ENCODE measurements at regions of chr1 and their contacts with region 1.

Region 1: GRCh38 chr1:78004719-78005447 is at the start of gene DNAJB4:
- DNase-seq: peak; percentile 97
- H3K4me3 Mint-ChIP-seq: peak within 1 kb of the TSS; percentile 88
- H3K27ac Mint-ChIP-seq: peak within 1 kb of the TSS; percentile 97
- H3K4me1 Mint-ChIP-seq: peaks cover 19% of the 10 kb centered on the region
- H3K27me3 Mint-ChIP-seq: no peaks in the 10 kb centered on the region
- CTCF ChIP-seq: no peak
- total RNA-seq, gene DNAJB4: 28.5 and 33.5 TPM in 2 replicates

Region 2: DNA sequence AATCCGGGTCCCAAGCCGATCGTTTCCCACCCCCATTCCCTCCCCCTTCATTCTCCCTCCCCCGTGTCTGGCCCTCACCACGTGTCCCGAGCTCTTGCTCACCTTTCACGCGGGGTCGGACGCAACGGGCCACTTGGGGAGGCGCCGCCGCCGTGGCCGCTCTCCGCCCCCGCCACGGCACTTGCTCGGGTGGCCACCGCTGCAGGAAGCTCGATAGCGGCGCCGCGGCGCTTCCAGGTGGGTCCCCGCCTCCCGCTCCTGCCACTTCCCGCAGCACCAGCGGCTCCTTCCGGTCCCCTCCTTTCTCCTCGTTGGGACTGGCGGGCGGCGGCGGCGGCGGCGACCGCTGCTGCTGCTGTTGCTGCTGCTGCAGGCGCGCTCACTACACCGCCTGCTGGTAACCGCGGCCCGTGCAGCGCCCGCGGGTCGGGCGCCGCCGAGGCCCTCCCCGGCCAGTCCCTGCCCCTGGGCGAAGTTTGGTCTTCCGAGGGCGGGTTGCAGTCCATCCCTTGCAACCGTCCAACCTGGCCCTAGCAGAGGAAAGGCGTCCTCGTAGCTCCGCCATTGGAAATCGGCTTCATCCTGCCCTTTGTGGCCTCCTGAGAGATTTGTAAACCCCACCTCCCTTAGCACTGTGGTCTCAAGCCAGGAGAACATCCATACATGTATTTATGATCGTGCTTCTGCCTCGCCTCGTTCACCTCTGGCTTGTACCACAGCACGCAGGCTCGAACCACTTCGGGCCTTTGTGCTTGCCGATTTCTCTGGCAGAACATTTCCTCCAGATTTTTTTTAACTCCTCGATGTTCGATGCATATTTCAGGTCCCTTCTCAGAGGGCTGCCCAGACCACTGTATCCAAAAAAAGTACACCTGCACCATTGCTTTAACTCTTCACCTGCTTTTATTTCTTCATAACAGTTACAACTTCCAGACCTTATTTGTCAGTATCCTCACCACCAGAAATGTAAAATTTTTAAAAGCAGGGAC is 321.4 kb before region 1 on chr1:
- CTCF ChIA-PET with region 1: no interaction called
- POLR2A ChIA-PET with region 1: interaction called, 14 read pairs
- intact Hi-C with region 1: no loop called
- DNase-seq: peak; percentile 89
- H3K4me3 Mint-ChIP-seq: peak overlapping the region; percentile 89
- H3K27ac Mint-ChIP-seq: peak overlapping the region; percentile 99
- H3K4me1 Mint-ChIP-seq: peaks cover 28% of the 10 kb centered on the region
- H3K27me3 Mint-ChIP-seq: no peaks in the 10 kb centered on the region
- CTCF ChIP-seq: peak; percentile 94

Region 3: DNA sequence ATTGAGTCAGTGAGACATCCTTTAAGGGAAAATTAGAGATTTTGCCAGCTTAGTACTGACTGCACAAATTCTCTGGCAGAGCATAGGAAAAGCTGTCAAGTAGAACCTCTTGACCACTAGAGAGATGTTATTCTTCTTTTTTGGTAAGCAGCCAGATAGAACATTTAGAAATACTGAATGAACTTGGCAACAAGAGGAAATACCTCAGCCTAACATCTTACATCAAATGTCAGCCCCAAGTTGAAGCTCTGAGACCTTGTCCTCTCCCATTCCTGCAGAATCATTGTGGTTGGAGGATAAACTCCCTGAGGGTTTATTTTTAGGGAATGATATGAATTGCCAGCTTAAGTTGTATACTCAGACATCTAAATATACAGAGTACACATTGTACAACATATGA is 172.0 kb before region 1 on chr1:
- CTCF ChIA-PET with region 1: no interaction called
- POLR2A ChIA-PET with region 1: interaction called, 10 read pairs
- intact Hi-C with region 1: no loop called
- DNase-seq: peak; percentile 92
- H3K4me3 Mint-ChIP-seq: peak overlapping the region; percentile 6
- H3K27ac Mint-ChIP-seq: peak overlapping the region; percentile 96
- H3K4me1 Mint-ChIP-seq: peaks cover 46% of the 10 kb centered on the region
- H3K27me3 Mint-ChIP-seq: no peaks in the 10 kb centered on the region
- CTCF ChIP-seq: no peak

Region 4: GRCh38 chr1:77994117-77994705 is 10.7 kb before region 1 on chr1:
- CTCF ChIA-PET with region 1: interaction called, 6 read pairs
- POLR2A ChIA-PET with region 1: interaction called, 21 read pairs
- intact Hi-C with region 1: no loop called
- DNase-seq: no peak
- H3K4me3 Mint-ChIP-seq: no peak overlapping the region
- H3K27ac Mint-ChIP-seq: no peak overlapping the region
- H3K4me1 Mint-ChIP-seq: peaks cover 18% of the 10 kb centered on the region
- H3K27me3 Mint-ChIP-seq: no peaks in the 10 kb centered on the region
- CTCF ChIP-seq: no peak

Region 5: DNA sequence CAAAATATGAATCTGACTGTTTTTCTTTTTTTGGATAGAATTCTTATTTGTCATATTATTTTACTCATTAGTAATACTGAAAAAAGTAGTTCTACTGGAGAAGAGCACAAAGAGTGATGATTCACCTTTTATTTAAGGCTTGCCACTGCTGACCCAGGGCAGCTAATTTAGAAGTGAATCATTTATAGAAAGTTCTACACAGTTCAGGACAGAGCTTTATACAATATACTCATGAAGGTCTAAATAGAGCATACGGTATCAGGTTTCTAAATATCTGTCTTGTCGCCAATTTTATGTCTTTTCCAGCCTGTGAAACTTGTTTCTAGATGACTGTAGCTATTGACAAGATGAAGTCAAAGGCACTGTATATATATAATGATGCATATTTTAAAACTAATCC is 65.9 kb after region 1 on chr1:
- CTCF ChIA-PET with region 1: interaction called, 4 read pairs
- POLR2A ChIA-PET with region 1: interaction called, 10 read pairs
- intact Hi-C with region 1: no loop called
- DNase-seq: peak; percentile 69
- H3K4me3 Mint-ChIP-seq: no peak overlapping the region
- H3K27ac Mint-ChIP-seq: no peak overlapping the region
- H3K4me1 Mint-ChIP-seq: peaks cover 14% of the 10 kb centered on the region
- H3K27me3 Mint-ChIP-seq: no peaks in the 10 kb centered on the region
- CTCF ChIP-seq: no peak

Region 6: GRCh38 chr1:78114034-78114956 is 109.4 kb after region 1 on chr1:
- CTCF ChIA-PET with region 1: interaction called, 35 read pairs
- POLR2A ChIA-PET with region 1: interaction called, 98 read pairs
- intact Hi-C with region 1: loop called (anchors 1 kb)
- DNase-seq: peak; percentile 84
- H3K4me3 Mint-ChIP-seq: no peak overlapping the region
- H3K27ac Mint-ChIP-seq: peak overlapping the region; percentile 47
- H3K4me1 Mint-ChIP-seq: peaks cover 6% of the 10 kb centered on the region
- H3K27me3 Mint-ChIP-seq: no peaks in the 10 kb centered on the region
- CTCF ChIP-seq: peak; percentile 91

Measured in MCF 10A (cell line).